Endothelial cell of umbilical vein (primary cell): ENCODE measurements at regions of chrX and their contacts with region 1.

Region 1: GRCh38 chrX:13101441-13102139 is 57.2 kb upstream of the FAM9C start:
- DNase-seq: peak; percentile 90
- H3K4me3 ChIP-seq: no peak overlapping the region
- H3K27ac ChIP-seq: peak overlapping the region; percentile 80
- H3K4me1 ChIP-seq: peaks cover 49% of the 10 kb centered on the region
- H3K27me3 ChIP-seq: no peaks in the 10 kb centered on the region
- CTCF ChIP-seq: no peak
- POLR2A ChIP-seq: no peak

Region 2: DNA sequence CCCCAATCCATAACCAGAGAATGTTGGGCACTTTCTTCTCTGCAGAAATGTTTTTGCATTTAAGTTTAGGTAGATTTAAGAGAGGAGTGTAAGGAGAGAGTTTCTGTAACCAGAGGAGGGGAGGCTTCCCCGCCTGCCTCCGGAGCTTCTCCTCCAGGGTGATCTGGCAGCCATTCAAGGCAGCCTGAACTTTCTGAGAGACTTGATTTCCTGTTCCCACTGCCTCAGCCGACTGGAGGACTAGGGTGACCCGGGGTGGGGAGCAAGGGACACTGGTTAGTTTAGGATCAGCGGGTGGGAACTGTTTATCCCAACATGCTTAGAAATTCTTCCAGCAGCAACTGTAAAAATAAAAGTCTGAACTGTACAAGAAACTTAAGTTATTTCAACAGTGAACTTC is 72.2 kb before region 1 on chrX:
- CTCF ChIA-PET with region 1: no interaction called
- POLR2A ChIA-PET with region 1: no interaction called
- dilution Hi-C with region 1: no loop called
- intact Hi-C with region 1: loop called (anchors 2 kb)
- DNase-seq: no peak
- H3K4me3 ChIP-seq: no peak overlapping the region
- H3K27ac ChIP-seq: peak overlapping the region; percentile 92
- H3K4me1 ChIP-seq: peaks cover 20% of the 10 kb centered on the region
- H3K27me3 ChIP-seq: no peaks in the 10 kb centered on the region
- CTCF ChIP-seq: no peak
- POLR2A ChIP-seq: no peak

Region 3: DNA sequence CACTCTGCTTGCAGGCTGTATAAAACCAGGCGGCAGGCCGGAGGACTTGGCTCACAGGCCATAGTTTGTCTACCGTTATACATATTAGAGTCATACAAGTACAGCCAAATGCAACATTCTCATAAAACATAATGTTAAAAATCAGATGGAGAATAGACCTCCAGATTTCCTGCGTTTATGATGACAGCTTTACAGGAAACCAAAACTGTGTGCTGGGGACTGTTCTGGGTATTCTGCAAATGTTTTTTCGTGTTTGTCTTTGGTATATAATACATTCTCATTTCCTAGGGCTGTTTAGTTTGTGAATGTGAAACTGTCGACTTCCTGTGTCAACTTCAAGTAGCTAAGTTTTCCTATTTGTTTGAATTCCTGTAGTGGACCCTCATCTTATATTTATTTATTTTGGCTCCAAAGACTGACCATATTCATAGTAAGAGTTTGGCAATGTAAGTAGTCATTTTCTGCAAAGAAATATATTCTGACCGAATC is 22.3 kb after region 1 on chrX:
- CTCF ChIA-PET with region 1: interaction called, 3 read pairs
- POLR2A ChIA-PET with region 1: interaction called, 3 read pairs
- dilution Hi-C with region 1: no loop called
- intact Hi-C with region 1: loop called (anchors 1 kb)
- DNase-seq: peak; percentile 93
- H3K4me3 ChIP-seq: no peak overlapping the region
- H3K27ac ChIP-seq: peak overlapping the region; percentile 91
- H3K4me1 ChIP-seq: peaks cover 59% of the 10 kb centered on the region
- H3K27me3 ChIP-seq: no peaks in the 10 kb centered on the region
- CTCF ChIP-seq: no peak
- POLR2A ChIP-seq: peak; percentile 45

Region 4: GRCh38 chrX:13144927-13145655 is 43.5 kb after region 1 on chrX:
- CTCF ChIA-PET with region 1: no interaction called
- POLR2A ChIA-PET with region 1: no interaction called
- dilution Hi-C with region 1: no loop called
- intact Hi-C with region 1: loop called (anchors 2 kb)
- DNase-seq: peak; percentile 36
- H3K4me3 ChIP-seq: no peak overlapping the region
- H3K27ac ChIP-seq: peak overlapping the region; percentile 48
- H3K4me1 ChIP-seq: peaks cover 13% of the 10 kb centered on the region
- H3K27me3 ChIP-seq: no peaks in the 10 kb centered on the region
- CTCF ChIP-seq: no peak
- POLR2A ChIP-seq: no peak

Region 5: DNA sequence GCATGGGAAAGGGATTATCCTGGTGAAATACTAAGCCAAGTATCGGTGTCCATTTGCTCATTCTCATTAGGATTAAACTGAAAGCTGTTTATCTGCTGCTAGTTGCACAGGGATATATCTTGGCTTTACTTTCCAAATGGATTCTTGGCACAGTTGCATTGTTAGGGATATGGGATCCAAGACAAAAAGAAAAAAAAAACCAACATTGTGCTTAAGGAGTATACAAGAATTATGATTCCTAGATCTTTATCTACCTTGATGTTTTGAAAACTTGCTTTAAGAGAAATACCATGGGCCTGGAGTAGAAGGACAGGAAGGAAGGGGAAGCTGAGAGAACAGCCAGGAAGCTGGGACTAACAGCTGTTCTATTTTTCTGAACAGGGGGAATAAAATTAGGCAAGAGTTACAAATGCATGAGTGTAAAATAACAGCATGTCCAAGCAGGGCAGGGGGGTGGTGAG is 110.6 kb after region 1 on chrX:
- CTCF ChIA-PET with region 1: no interaction called
- POLR2A ChIA-PET with region 1: no interaction called
- dilution Hi-C with region 1: no loop called
- intact Hi-C with region 1: loop called (anchors 2 kb)
- DNase-seq: peak; percentile 82
- H3K4me3 ChIP-seq: no peak overlapping the region
- H3K27ac ChIP-seq: peak overlapping the region; percentile 63
- H3K4me1 ChIP-seq: peaks cover 24% of the 10 kb centered on the region
- H3K27me3 ChIP-seq: no peaks in the 10 kb centered on the region
- CTCF ChIP-seq: no peak
- POLR2A ChIP-seq: no peak

Region 6: DNA sequence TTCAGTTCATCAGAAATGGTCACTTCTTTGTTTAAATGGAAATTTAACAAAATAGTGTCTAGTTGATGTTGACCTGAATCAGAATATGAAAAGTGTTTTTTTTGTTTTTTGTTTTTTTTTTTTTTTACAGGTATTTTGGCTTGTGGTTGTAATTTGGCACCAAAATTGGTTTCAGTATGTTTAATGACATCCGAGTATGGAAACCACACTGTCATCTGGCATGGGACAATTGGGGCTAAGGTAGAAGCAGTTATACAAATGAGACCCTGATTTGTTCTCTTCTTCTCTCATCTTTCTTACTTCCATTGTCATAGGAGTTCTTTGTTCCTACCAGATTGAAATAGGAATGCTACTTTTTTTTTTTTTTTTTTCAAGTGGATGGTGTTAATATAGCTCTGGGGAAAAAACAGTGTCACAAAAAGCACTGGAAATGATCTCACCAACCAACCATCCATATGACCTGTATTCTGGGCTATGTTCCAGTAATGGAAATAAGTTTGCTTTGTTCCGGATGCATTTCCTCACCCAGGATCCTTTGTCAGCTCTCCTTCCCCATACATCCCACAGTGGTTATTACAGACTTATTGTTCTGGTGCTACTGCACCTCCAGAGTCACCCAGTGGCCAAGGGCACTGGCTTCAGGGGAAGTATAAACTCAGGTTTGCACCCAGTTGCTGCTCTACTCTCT is 122.4 kb after region 1 on chrX:
- CTCF ChIA-PET with region 1: interaction called, 3 read pairs
- POLR2A ChIA-PET with region 1: no interaction called
- dilution Hi-C with region 1: no loop called
- intact Hi-C with region 1: loop called (anchors 1 kb)
- DNase-seq: peak; percentile 91
- H3K4me3 ChIP-seq: no peak overlapping the region
- H3K27ac ChIP-seq: peak overlapping the region; percentile 87
- H3K4me1 ChIP-seq: peaks cover 16% of the 10 kb centered on the region
- H3K27me3 ChIP-seq: no peaks in the 10 kb centered on the region
- CTCF ChIP-seq: peak in 1 of 2 donors; percentile 14
- POLR2A ChIP-seq: no peak

Region 7: GRCh38 chrX:13283950-13284914 is 182.6 kb after region 1 on chrX:
- CTCF ChIA-PET with region 1: no interaction called
- POLR2A ChIA-PET with region 1: no interaction called
- dilution Hi-C with region 1: no loop called
- intact Hi-C with region 1: loop called (anchors 5 kb)
- DNase-seq: peak; percentile 71
- H3K4me3 ChIP-seq: no peak overlapping the region
- H3K27ac ChIP-seq: peak overlapping the region; percentile 62
- H3K4me1 ChIP-seq: peaks cover 49% of the 10 kb centered on the region
- H3K27me3 ChIP-seq: no peaks in the 10 kb centered on the region
- CTCF ChIP-seq: no peak
- POLR2A ChIP-seq: no peak

Region 8: GRCh38 chrX:13387666-13388494 is 286.3 kb after region 1 on chrX:
- CTCF ChIA-PET with region 1: no interaction called
- POLR2A ChIA-PET with region 1: no interaction called
- dilution Hi-C with region 1: no loop called
- intact Hi-C with region 1: no loop called
- DNase-seq: no peak
- H3K4me3 ChIP-seq: no peak overlapping the region
- H3K27ac ChIP-seq: no peak overlapping the region
- H3K4me1 ChIP-seq: no peaks in the 10 kb centered on the region
- H3K27me3 ChIP-seq: no peaks in the 10 kb centered on the region
- CTCF ChIP-seq: no peak
- POLR2A ChIP-seq: no peak